GM18951 (cell line): ENCODE measurements at regions of chr17 and their contacts with region 1.

Region 1: DNA sequence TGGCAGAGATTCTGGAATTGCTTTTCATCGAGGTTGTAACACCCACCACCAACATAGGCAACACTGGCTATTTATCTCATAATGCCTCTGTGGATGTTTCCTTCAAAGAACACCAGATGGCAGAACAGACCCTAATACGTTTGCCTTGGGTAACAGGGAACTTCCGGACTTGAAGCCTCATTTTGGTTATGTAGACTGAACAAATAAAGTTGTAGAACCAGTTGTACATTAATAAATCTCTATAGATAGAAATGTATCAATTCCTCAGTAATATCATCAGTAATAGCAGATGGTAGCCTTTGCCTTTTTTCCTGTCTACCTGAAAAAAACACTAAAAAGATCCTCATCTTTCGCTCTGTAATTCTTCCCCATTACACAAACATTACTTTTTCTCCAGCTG is 25.9 kb upstream of the APOH start:
- POLR2A ChIP-seq: no peak

Region 2: DNA sequence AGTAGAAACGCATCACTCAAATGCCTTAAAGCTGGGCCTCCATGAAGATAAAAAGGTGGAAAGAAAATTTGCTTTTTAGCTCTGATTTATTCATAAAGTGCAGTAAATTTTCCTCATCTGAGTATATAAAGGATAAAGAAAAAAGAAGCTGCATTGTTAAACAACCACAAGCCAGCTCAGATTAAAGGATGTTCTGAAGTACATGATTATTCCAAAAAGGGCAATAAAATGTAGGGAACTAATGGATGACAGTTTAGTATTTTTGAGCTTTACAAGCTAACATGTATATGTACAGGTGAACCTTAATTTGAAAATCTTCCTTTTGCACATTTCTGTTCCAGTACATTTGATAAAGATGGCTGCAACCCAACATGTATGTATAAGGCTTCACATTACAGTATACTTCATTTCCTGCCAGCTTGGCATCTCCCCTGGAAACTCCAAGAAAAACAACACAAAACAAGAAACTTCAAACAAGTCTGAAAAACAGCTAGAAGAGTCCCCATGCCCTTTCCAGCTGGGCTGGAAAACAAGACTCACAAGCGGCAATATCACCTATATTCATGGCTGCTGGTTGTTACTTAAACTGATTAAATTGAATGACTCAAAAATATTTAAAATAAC is 288.9 kb before region 1 on chr17:
- in situ Hi-C with region 1: no loop called
- POLR2A ChIP-seq: no peak

Region 3: DNA sequence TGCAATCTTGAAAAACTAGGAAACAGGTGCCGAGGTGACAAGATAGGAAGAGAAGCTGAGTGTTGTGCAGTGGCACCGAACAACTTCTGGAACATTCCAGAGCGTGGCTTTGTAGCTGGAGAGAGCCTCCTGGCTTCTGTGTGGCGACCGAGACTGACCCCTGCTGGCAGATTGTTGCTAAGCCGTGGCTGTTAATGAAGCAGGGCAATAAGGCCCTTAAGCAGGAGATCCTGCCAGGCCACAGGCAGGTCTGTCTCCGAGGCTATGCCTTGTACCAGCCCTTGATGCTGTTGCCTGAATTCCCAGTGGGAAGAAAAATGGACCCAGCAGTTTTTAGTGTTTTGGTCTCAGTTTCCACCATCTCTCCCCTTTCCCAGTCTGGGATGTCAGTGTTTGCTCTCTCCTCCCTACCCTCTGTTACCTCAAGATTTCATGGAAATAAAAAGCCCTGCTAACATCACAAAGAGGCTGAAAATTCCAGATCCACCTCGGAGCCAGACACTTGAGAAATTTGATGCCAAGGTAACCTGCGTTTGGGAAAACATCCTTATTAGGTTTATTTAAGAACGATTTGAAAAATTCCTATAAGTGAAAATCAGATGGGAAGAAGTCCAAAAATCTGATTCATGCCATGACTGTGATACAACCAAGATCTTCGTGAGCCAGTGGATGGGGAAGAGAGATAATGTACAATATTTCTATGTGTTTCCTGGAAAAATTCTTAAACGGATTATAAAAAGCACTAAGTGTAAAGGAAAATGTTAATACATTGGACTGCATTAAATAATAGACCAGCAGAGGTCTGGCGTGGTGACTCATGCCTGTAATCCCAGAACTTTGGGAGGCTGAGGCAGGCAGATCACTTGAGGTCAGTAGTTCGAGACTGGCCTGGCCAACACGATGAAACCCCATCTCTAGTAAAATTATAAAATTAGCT is 312.4 kb after region 1 on chr17:
- in situ Hi-C with region 1: loop called (anchors 25 kb)
- POLR2A ChIP-seq: no peak